ENCODE measurements at regions of chr1 and their contacts with region 1.

Region 1: GRCh38 chr1:20089321-20090077 is 19.5 kb downstream of the PLA2G5 start:
- DNase-seq: peak; percentile 6 to 26
- ATAC-seq: peak; percentile 54 to 62; a peak in 5 of 6 replicates
- H3K4me3 ChIP-seq: no peak overlapping the region
- H3K27ac ChIP-seq: no peak overlapping the region
- H3K4me1 ChIP-seq: no peaks in the 10 kb centered on the region
- CTCF ChIP-seq: no peak
- EP300 ChIP-seq: no peak
- POLR2A ChIP-seq: no peak
- RAD21 ChIP-seq: no peak

Region 2: GRCh38 chr1:20058531-20058930 is 31.0 kb before region 1 on chr1:
- CTCF ChIA-PET with region 1: no interaction called
- POLR2A ChIA-PET with region 1: no interaction called
- DNase-seq: no peak
- ATAC-seq: no peak
- H3K4me3 ChIP-seq: no peak overlapping the region
- H3K27ac ChIP-seq: no peak overlapping the region
- H3K4me1 ChIP-seq: no peaks in the 10 kb centered on the region
- CTCF ChIP-seq: no peak
- EP300 ChIP-seq: no peak
- POLR2A ChIP-seq: no peak
- RAD21 ChIP-seq: no peak

Region 3: GRCh38 chr1:20100632-20101355 is 11.3 kb after region 1 on chr1:
- CTCF ChIA-PET with region 1: interaction called, 18 read pairs
- POLR2A ChIA-PET with region 1: no interaction called
- DNase-seq: peak; percentile 34 to 42
- ATAC-seq: peak; percentile 90 to 94
- H3K4me3 ChIP-seq: no peak overlapping the region
- H3K27ac ChIP-seq: no peak overlapping the region
- H3K4me1 ChIP-seq: no peaks in the 10 kb centered on the region
- CTCF ChIP-seq: peak; percentile 48
- EP300 ChIP-seq: no peak
- POLR2A ChIP-seq: no peak
- RAD21 ChIP-seq: peak; percentile 65 to 71

Region 4: GRCh38 chr1:20376880-20377494 is 287.5 kb after region 1 on chr1:
- CTCF ChIA-PET with region 1: no interaction called
- POLR2A ChIA-PET with region 1: no interaction called
- DNase-seq: peak; percentile 34 to 59
- ATAC-seq: peak; percentile 65 to 92; a peak in 5 of 6 replicates
- H3K4me3 ChIP-seq: no peak overlapping the region
- H3K27ac ChIP-seq: peak overlapping the region in 1 of 2 experiments; percentile 43; a peak in 2 of 6 replicates
- H3K4me1 ChIP-seq: peaks cover 33% of the 10 kb centered on the region
- CTCF ChIP-seq: peak; percentile 48
- EP300 ChIP-seq: no peak
- POLR2A ChIP-seq: no peak
- RAD21 ChIP-seq: peak; percentile 42 to 61; a peak in 4 of 5 replicates

Measured in A549 (cell line).